Activated T-helper 2 cell treated with anti-CD3 and anti-CD28 coated beads, Interferon-gamma antibody, Interleukin-2, Interleukin-4, amounts not matched to agents 10 μg/mL and 5 μg/mL and 100 μg/mL, durations not matched to agents 14 hours and 24 hours and 36 hours (primary cell): ENCODE measurements at regions of chr2 and their contacts with region 1.

Region 1: GRCh38 chr2:30711646-30712085 is 95.6 kb downstream of the CAPN13 start:
- DNase-seq: peak; percentile 79
- H3K4me3 Mint-ChIP-seq: no peak overlapping the region
- H3K27ac Mint-ChIP-seq: no peak overlapping the region
- H3K4me1 Mint-ChIP-seq: peaks cover 9% of the 10 kb centered on the region
- H3K27me3 Mint-ChIP-seq: no peaks in the 10 kb centered on the region

Region 2: GRCh38 chr2:30098266-30099005 is 613.2 kb before region 1 on chr2:
- intact Hi-C with region 1: loop called (anchors 5 kb)
- DNase-seq: no peak
- H3K4me3 Mint-ChIP-seq: no peak overlapping the region
- H3K27ac Mint-ChIP-seq: no peak overlapping the region
- H3K4me1 Mint-ChIP-seq: no peaks in the 10 kb centered on the region
- H3K27me3 Mint-ChIP-seq: peaks cover 20% of the 10 kb centered on the region

Region 3: GRCh38 chr2:30165050-30165520 is 546.6 kb before region 1 on chr2:
- intact Hi-C with region 1: loop called (anchors 1 kb)
- DNase-seq: peak; percentile 65
- H3K4me3 Mint-ChIP-seq: no peak overlapping the region
- H3K27ac Mint-ChIP-seq: no peak overlapping the region
- H3K4me1 Mint-ChIP-seq: peaks cover 8% of the 10 kb centered on the region
- H3K27me3 Mint-ChIP-seq: no peaks in the 10 kb centered on the region

Region 4: GRCh38 chr2:30862054-30862651 is 150.5 kb after region 1 on chr2:
- intact Hi-C with region 1: loop called (anchors 5 kb)
- DNase-seq: peak; percentile 25
- H3K4me3 Mint-ChIP-seq: no peak overlapping the region
- H3K27ac Mint-ChIP-seq: no peak overlapping the region
- H3K4me1 Mint-ChIP-seq: peaks cover 14% of the 10 kb centered on the region
- H3K27me3 Mint-ChIP-seq: no peaks in the 10 kb centered on the region

Region 5: GRCh38 chr2:31333527-31334183 is 622.0 kb after region 1 on chr2:
- intact Hi-C with region 1: loop called (anchors 1 kb)
- DNase-seq: peak; percentile 68
- H3K4me3 Mint-ChIP-seq: no peak overlapping the region
- H3K27ac Mint-ChIP-seq: no peak overlapping the region
- H3K4me1 Mint-ChIP-seq: peaks cover 2% of the 10 kb centered on the region
- H3K27me3 Mint-ChIP-seq: peaks cover 25% of the 10 kb centered on the region